Heart right ventricle (tissue), 16 donors: ENCODE measurements at regions of chr15 and their contacts with region 1.

Region 1: DNA sequence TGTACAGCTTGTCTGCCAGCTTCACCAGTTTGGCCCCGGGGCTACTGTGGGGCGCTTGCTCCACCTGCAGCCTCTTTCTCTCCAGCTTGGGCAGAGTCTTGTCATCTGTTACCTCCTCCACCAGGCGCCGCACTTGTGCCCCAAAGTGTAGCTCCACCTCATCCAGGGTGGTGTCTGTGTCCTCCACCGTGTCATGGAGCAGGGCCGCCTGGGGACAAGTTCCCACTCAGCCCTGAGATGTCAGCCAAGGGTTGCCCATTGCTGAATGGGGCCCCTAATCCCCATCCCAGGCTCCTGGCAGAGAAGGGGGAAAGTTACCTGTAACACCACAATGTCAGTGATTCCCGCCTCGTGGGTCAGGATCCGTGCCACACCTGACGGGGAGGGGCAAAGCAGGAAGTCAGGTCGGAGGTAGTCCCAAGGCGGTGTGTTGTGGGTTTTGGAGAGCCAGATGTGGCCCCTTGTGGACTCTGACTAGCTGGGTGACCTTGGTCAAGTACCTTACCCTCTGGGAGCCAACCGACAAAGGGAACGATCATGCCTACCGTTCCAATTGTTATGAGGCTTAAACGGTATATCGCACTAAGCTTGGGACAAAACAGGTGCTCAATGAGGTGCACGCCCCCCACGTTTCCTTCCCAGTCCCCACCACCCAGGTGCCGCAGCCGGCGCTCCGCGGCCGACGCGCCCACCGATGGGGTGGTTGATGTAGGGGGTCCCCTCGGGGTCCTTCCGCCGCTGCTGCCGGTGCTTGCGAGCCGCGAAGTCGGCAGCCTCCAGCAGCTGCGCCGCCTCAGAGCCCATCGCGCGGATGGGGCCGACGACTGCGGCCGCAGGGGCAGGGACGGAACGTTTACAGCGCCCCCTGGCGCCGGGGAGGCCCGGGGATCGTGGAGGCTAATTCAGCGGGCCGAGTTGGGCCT is at the start of gene HDDC3:
- DNase-seq: peak; percentile 93 to 95
- ATAC-seq: peak; percentile 58 to 74 (median 66)
- H3K4me3 ChIP-seq: peak within 1 kb of the TSS; percentile 49 to 92 (median 78)
- H3K27ac ChIP-seq: peak within 1 kb of the TSS; percentile 81 to 98 (median 96)
- H3K4me1 ChIP-seq: peaks cover 18 to 74% (median 53%) of the 10 kb centered on the region in 9 donors
- H3K27me3 ChIP-seq: no peaks in the 10 kb centered on the region
- CTCF ChIP-seq: peak; percentile 92 to 99 (median 97)
- total RNA-seq, gene HDDC3: 10.7 to 18.2 (median 14.6) TPM

Region 2: GRCh38 chr15:90895336-90896117 is 36.5 kb before region 1 on chr15:
- intact Hi-C with region 1: loop called in 1 of 10 experiments (anchors 5 kb)
- DNase-seq: no peak
- ATAC-seq: peak in 7 of 8 donors; percentile 5 to 30 (median 22)
- H3K4me3 ChIP-seq: no peak overlapping the region
- H3K27ac ChIP-seq: no peak overlapping the region
- H3K4me1 ChIP-seq: peaks cover 0 to 10% (median 5%) of the 10 kb centered on the region in 9 donors
- H3K27me3 ChIP-seq: no peaks in the 10 kb centered on the region
- CTCF ChIP-seq: no peak

Region 3: DNA sequence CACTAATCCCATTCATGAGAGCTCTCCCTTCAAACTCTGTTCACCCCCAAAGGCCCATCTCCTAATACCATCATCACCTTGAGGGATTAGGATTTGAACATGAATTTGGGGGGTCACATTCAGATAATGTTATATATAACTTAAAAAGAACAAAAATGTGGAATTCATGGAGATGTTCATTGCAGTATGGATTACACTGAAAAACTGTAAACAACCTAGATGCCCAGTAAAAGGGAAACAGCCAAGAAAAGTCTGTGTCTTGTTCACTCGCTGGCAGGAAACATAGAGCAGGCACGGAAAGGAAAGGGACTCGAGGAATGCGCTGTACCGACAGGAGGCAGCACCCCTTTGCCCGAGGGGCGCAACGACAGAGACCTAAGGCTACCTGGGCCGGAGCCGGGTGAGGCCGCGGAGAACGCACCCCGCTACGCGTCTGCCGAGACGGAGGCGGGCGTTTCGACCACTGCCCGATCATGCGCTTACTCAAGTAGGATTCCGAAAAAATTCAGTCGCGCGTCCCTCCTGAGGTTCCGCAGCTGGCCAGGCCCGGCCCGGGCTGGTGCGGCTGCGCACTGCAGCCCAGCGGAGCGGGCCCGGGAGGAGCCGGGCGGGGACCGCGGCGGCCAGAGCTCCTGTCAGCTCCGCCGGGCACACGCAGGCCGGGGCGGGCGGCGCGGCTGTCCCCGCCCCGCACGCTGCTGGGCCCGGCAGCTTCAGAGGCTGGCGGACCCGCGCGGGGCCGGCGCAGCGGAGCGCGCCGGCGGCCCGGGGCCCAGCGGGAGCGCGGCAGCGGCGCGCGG is 29.8 kb before region 1 on chr15:
- intact Hi-C with region 1: loop called in 7 of 10 experiments (anchors 1 to 5 kb)
- DNase-seq: peak; percentile 70 to 81
- ATAC-seq: peak; percentile 88 to 94 (median 90)
- H3K4me3 ChIP-seq: peak overlapping the region; percentile 24 to 92 (median 82)
- H3K27ac ChIP-seq: peak overlapping the region; percentile 79 to 97 (median 93)
- H3K4me1 ChIP-seq: peaks cover 6 to 39% (median 24%) of the 10 kb centered on the region in 9 donors
- H3K27me3 ChIP-seq: no peaks in the 10 kb centered on the region
- CTCF ChIP-seq: peak; percentile 34 to 97 (median 80)